ENCODE measurements at regions of chr6 and their contacts with region 1.

Region 1: DNA sequence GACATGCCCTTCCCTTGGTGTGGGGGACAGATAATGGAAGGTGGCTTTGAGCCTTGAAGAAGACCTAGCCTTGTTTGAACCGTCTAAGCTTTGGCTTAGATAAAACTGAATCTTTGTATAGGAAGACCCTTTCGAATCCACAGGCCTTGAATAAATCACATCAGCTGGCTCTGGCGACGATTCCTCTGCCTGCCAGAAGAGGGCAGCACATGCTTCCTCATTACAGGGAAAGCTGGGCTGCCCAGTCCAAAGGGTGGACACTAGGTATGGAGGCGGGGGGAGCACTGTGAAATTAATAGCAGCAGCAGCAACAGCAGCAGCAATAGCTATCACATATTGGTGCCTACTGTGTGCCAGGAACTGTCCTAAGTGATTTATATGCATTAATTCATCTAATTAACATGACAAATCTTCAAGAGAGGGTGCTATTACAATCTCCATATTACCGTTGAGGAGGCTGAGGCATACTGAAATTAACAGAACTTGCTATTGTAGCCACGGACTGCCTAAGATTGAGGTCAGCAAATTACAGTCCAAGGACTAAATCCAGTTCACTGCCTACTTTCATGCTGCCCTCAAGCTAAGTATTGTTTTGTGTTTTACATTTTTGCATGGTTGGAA is 85.1 kb downstream of the CLIC5 start:
- DNase-seq: peak; percentile 68
- H3K4me3 Mint-ChIP-seq: no peak overlapping the region
- H3K27ac Mint-ChIP-seq: no peak overlapping the region
- H3K4me1 Mint-ChIP-seq: peaks cover 7% of the 10 kb centered on the region
- H3K27me3 Mint-ChIP-seq: no peaks in the 10 kb centered on the region

Region 2: GRCh38 chr6:44630125-44631028 is 1300.2 kb before region 1 on chr6:
- CTCF ChIA-PET with region 1: interaction called, 35 read pairs
- POLR2A ChIA-PET with region 1: no interaction called
- intact Hi-C with region 1: no loop called
- DNase-seq: peak; percentile 66
- H3K4me3 Mint-ChIP-seq: no peak overlapping the region
- H3K27ac Mint-ChIP-seq: no peak overlapping the region
- H3K4me1 Mint-ChIP-seq: peaks cover 15% of the 10 kb centered on the region
- H3K27me3 Mint-ChIP-seq: no peaks in the 10 kb centered on the region

Region 3: DNA sequence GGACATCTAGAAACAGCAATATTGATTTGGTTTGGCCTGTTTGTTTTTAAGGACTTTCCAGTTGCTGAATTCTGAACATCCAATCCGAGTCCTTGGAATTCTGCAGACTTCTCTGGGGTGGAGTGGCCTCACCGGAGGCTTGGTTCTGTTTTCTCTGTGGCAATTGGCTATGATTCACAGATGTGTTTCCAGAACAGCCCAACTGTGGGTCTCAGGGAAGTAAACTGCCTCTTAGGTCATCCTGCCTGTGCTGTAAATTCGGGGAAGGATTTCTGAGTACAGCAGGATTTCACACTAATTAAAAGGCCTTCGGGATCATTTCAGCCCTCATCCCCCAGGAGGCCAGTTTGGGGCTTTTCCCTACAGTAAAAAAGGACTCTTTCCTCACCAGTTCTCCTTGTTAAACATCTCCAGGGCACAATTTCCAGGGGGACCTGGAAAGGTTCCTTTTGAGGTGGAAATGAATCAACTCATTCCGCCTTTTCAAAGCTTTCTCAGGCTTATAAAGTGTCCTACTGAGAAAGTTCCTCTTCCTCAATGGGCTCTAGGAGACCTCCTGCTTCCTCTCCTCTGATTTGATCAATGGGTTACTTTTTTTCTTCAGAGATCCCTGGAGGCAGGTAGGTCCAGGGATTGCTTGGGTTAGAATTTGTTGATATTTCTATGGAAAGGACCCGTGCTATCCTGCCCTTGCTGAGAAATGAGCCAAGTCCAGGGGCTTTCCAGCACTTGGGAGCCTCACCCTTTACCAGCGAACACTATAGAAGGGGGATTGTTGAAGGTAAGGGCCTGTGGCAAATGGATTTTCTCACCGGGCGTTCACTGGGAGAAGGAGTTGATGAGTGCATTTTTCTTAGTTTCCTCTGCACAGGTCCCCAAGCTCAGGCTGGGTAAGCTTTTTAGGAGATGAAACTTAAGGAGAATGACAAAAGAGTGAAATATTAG is 29.4 kb before region 1 on chr6:
- CTCF ChIA-PET with region 1: no interaction called
- POLR2A ChIA-PET with region 1: no interaction called
- intact Hi-C with region 1: no loop called
- DNase-seq: no peak
- H3K4me3 Mint-ChIP-seq: no peak overlapping the region
- H3K27ac Mint-ChIP-seq: no peak overlapping the region
- H3K4me1 Mint-ChIP-seq: peaks cover 15% of the 10 kb centered on the region
- H3K27me3 Mint-ChIP-seq: no peaks in the 10 kb centered on the region

Region 4: DNA sequence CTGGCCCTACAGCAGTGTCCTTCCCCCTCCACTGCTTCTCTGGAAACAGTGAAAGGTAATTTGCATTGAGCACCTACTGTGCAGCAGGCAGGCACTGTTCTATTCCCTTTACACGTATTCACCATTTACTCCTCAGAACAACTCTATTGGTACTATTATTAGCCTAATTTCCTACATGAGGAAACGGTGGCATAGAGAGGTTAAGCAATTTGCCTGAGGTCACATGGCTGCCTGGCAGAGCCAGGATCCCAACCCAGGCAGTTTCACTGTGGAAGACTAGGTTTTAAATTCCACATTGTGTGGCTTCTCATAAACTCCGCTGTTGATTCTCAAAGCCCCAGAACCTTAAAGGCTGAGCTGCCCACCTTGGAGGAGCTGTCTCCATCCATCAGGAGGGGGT is 12.4 kb after region 1 on chr6:
- CTCF ChIA-PET with region 1: interaction called, 17 read pairs
- POLR2A ChIA-PET with region 1: no interaction called
- intact Hi-C with region 1: no loop called
- DNase-seq: no peak
- H3K4me3 Mint-ChIP-seq: no peak overlapping the region
- H3K27ac Mint-ChIP-seq: no peak overlapping the region
- H3K4me1 Mint-ChIP-seq: no peaks in the 10 kb centered on the region
- H3K27me3 Mint-ChIP-seq: no peaks in the 10 kb centered on the region

Region 5: GRCh38 chr6:46042355-46042999 is 111.9 kb after region 1 on chr6:
- CTCF ChIA-PET with region 1: interaction called, 10 read pairs
- POLR2A ChIA-PET with region 1: no interaction called
- intact Hi-C with region 1: no loop called
- DNase-seq: peak; percentile 23
- H3K4me3 Mint-ChIP-seq: no peak overlapping the region
- H3K27ac Mint-ChIP-seq: no peak overlapping the region
- H3K4me1 Mint-ChIP-seq: peaks cover 13% of the 10 kb centered on the region
- H3K27me3 Mint-ChIP-seq: peaks cover 1% of the 10 kb centered on the region

Region 6: GRCh38 chr6:46410334-46410953 is 479.9 kb after region 1 on chr6:
- CTCF ChIA-PET with region 1: interaction called, 29 read pairs
- POLR2A ChIA-PET with region 1: no interaction called
- intact Hi-C with region 1: loop called (anchors 1 kb)
- DNase-seq: peak; percentile 34
- H3K4me3 Mint-ChIP-seq: no peak overlapping the region
- H3K27ac Mint-ChIP-seq: no peak overlapping the region
- H3K4me1 Mint-ChIP-seq: no peaks in the 10 kb centered on the region
- H3K27me3 Mint-ChIP-seq: no peaks in the 10 kb centered on the region

Region 7: GRCh38 chr6:46616563-46616962 is 686.0 kb after region 1 on chr6:
- CTCF ChIA-PET with region 1: no interaction called
- POLR2A ChIA-PET with region 1: no interaction called
- intact Hi-C with region 1: no loop called
- DNase-seq: no peak
- H3K4me3 Mint-ChIP-seq: no peak overlapping the region
- H3K27ac Mint-ChIP-seq: no peak overlapping the region
- H3K4me1 Mint-ChIP-seq: no peaks in the 10 kb centered on the region
- H3K27me3 Mint-ChIP-seq: peaks cover 20% of the 10 kb centered on the region